ENCODE measurements at regions of chr19 and their contacts with region 1.

Region 1: GRCh38 chr19:15091901-15092753 is 10.1 kb downstream of the OR1I1 start:
- DNase-seq: no peak
- ATAC-seq: peak; percentile 68
- H3K4me3 ChIP-seq: no peak overlapping the region
- H3K27ac ChIP-seq: no peak overlapping the region
- H3K4me1 ChIP-seq: no peaks in the 10 kb centered on the region
- H3K27me3 ChIP-seq: no peaks in the 10 kb centered on the region
- CTCF ChIP-seq: peak; percentile 54 to 62 (median 61)
- EP300 ChIP-seq: no peak
- POLR2A ChIP-seq: no peak
- RAD21 ChIP-seq: peak; percentile 71

Region 2: GRCh38 chr19:15038297-15038696 is 53.8 kb before region 1 on chr19:
- CTCF ChIA-PET with region 1: no interaction called
- POLR2A ChIA-PET with region 1: no interaction called
- RAD21 ChIA-PET with region 1: no interaction called
- SMC1A ChIA-PET with region 1: no interaction called
- in situ Hi-C with region 1: no loop called
- intact Hi-C with region 1: no loop called
- DNase-seq: no peak
- ATAC-seq: no peak
- H3K4me3 ChIP-seq: no peak overlapping the region
- H3K27ac ChIP-seq: no peak overlapping the region
- H3K4me1 ChIP-seq: no peaks in the 10 kb centered on the region
- H3K27me3 ChIP-seq: no peaks in the 10 kb centered on the region; a peak in 1 of 4 replicates
- CTCF ChIP-seq: no peak
- EP300 ChIP-seq: no peak
- POLR2A ChIP-seq: no peak
- RAD21 ChIP-seq: no peak

Region 3: DNA sequence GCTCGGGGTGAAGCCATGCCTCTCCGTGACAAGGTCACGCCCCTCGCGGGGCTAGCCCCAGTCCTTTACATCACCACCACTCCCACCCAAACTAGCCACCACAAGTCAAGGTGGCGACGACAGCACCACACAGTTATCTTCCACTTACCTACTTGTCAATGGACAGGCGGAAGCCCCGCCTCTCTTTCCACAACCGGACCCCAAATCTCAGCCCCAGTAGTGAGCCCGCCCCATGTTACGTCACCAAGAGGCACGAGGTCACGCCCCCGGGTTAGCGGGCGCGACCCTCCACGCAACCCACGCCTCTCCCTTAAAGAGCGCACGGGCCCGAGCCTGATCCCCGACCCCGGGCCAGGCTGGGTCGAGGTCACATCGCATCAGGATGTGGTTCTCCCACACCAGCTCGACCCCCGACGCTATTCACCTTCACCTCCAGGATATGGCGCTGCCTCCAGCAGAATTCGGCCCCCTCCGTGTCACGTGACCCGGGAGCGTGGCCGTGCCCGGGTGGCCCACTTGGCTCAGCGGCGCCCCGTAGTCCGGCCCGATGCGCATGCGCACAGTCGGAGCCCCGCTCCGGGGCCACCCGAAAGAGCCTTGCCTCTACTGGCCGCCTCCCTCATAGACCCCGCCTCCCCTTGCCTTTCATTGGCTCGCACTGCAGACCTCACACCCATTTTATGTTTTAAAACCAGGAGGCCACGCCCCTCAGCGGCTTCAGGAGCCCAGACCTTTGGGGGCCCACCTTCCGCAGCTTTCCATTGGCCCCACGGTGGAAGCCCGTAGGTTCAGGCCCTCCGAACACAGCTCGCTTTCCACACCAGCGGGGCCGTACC is 33.3 kb after region 1 on chr19:
- CTCF ChIA-PET with region 1: interaction called, 21 read pairs
- POLR2A ChIA-PET with region 1: no interaction called
- RAD21 ChIA-PET with region 1: no interaction called
- SMC1A ChIA-PET with region 1: no interaction called
- in situ Hi-C with region 1: no loop called
- intact Hi-C with region 1: no loop called
- DNase-seq: peak; percentile 93
- ATAC-seq: peak; percentile 96
- H3K4me3 ChIP-seq: peak overlapping the region; percentile 82
- H3K27ac ChIP-seq: peak overlapping the region; percentile 76
- H3K4me1 ChIP-seq: peaks cover 6% of the 10 kb centered on the region
- H3K27me3 ChIP-seq: no peaks in the 10 kb centered on the region
- CTCF ChIP-seq: peak in 1 of 3 experiments; percentile 4; a peak in 1 of 6 replicates
- EP300 ChIP-seq: 0 out of 4 replicates have a peak, but pooled peaks of 1 of the 2 experiments have one; percentile 1
- POLR2A ChIP-seq: peak; percentile 95
- RAD21 ChIP-seq: no peak

Region 4: DNA sequence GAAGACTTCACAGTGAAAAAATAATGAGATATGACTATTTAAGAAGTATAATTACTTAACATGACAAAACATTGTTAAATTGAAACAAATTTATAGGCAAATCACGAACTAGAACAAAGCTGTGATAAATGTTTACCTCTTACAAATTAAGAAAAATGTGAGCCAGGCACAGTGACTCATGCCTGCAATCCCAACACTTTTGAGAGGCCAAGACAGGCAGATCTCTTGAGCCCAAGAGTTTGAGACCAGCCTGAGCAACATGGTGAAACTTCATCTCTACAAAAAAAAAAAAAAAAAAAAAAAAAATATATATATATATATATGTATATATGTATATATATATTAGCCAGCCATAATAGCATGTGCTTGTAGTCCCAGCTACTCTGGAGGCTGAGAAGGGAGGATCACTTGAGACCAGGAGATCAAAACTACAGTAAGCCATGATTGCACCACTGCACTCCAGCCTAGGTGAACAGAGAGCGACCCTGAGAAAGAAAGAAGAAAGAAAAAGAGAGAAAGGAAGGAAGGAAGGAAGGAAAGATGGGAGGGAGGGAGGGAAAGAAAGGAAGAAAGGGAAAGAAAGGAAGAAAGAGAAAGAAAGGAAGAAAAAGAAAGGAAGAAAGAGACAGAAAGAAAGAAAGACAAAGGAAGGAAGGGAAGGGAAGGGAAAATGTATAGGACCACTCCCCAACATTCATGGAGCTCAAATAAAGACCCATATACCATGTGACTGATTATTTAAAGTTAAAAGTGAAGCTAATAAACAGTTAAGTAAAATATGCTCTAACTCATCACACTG is 54.8 kb after region 1 on chr19:
- CTCF ChIA-PET with region 1: interaction called, 40 read pairs
- POLR2A ChIA-PET with region 1: no interaction called
- RAD21 ChIA-PET with region 1: interaction called, 5 read pairs
- SMC1A ChIA-PET with region 1: interaction called, 5 read pairs
- in situ Hi-C with region 1: loop called (anchors 5 kb)
- intact Hi-C with region 1: loop called (anchors 1 kb)
- DNase-seq: no peak
- ATAC-seq: no peak
- H3K4me3 ChIP-seq: no peak overlapping the region
- H3K27ac ChIP-seq: no peak overlapping the region
- H3K4me1 ChIP-seq: no peaks in the 10 kb centered on the region
- H3K27me3 ChIP-seq: no peaks in the 10 kb centered on the region
- CTCF ChIP-seq: no peak
- EP300 ChIP-seq: no peak
- POLR2A ChIP-seq: no peak
- RAD21 ChIP-seq: no peak

Region 5: GRCh38 chr19:15154002-15154612 is 62.0 kb after region 1 on chr19:
- CTCF ChIA-PET with region 1: interaction called, 40 read pairs
- POLR2A ChIA-PET with region 1: no interaction called
- RAD21 ChIA-PET with region 1: interaction called, 5 read pairs
- SMC1A ChIA-PET with region 1: interaction called, 5 read pairs
- in situ Hi-C with region 1: loop called (anchors 5 kb)
- intact Hi-C with region 1: loop called (anchors 1 kb)
- DNase-seq: no peak
- ATAC-seq: no peak
- H3K4me3 ChIP-seq: no peak overlapping the region
- H3K27ac ChIP-seq: no peak overlapping the region
- H3K4me1 ChIP-seq: no peaks in the 10 kb centered on the region
- H3K27me3 ChIP-seq: no peaks in the 10 kb centered on the region
- CTCF ChIP-seq: peak; percentile 43 to 48 (median 45); a peak in 5 of 6 replicates
- EP300 ChIP-seq: no peak
- POLR2A ChIP-seq: no peak
- RAD21 ChIP-seq: peak; percentile 30; the same call in 1 of the 2 replicates

Region 6: GRCh38 chr19:15195371-15196334 is 103.5 kb after region 1 on chr19:
- CTCF ChIA-PET with region 1: no interaction called
- POLR2A ChIA-PET with region 1: no interaction called
- RAD21 ChIA-PET with region 1: no interaction called
- SMC1A ChIA-PET with region 1: no interaction called
- in situ Hi-C with region 1: no loop called
- intact Hi-C with region 1: no loop called
- DNase-seq: no peak
- ATAC-seq: no peak
- H3K4me3 ChIP-seq: no peak overlapping the region
- H3K27ac ChIP-seq: no peak overlapping the region
- H3K4me1 ChIP-seq: no peaks in the 10 kb centered on the region
- H3K27me3 ChIP-seq: peaks cover 0 to 2% of the 10 kb centered on the region in 2 experiments; a peak in 2 of 4 replicates
- CTCF ChIP-seq: no peak
- EP300 ChIP-seq: no peak
- POLR2A ChIP-seq: no peak
- RAD21 ChIP-seq: no peak

Measured in GM12878 (cell line).